ENCODE measurements at regions of chr9 and their contacts with region 1.

Region 1: GRCh38 chr9:32550562-32551433 is 1.3 kb upstream of the SMIM27 start:
- DNase-seq: peak; percentile 81 to 97
- H3K4me3 ChIP-seq: peak overlapping the region; percentile 67 to 80
- H3K27ac ChIP-seq: peak overlapping the region; percentile 80 to 90
- H3K4me1 ChIP-seq: peaks cover 0 to 16% of the 10 kb centered on the region in 2 donors
- H3K27me3 ChIP-seq: no peaks in the 10 kb centered on the region
- CTCF ChIP-seq: peak in 1 of 3 experiments; percentile 24

Region 2: DNA sequence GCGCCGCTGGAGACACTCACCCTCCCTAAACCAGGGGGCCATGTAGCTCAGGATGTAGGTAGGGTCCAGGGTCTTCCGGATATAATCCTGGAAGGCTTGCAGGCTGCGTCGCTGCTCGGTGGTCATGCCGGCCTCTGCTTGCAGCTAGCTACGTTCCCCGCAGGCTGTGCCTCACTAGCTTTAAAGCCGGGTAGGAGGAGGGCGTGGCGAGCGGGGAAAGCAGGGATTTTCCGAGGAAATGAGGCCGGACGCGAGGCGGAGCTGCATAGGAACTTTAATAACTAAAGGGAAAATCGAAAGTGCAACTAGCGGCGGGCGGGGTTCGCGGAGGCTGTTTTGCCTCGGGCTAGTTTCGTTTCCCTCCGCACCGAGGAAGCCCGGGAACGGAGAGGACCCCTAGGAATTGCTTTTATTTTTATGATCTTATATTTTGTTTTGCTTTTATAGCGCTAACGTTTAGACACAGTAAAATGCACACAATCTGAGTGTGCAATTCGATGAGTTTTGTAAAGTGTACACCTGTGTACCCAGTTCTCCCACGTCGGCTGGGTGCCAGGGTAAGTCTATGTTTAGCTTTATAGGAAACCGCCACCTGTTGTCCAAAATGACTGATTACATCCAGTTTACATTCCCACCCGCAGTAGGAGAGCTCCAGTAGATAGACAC is 24.6 kb before region 1 on chr9 and contains the start of gene RIGI:
- intact Hi-C with region 1: loop called (anchors 1 kb)
- DNase-seq: peak; percentile 72 to 97
- H3K4me3 ChIP-seq: peak within 1 kb of the TSS; percentile 71 to 78
- H3K27ac ChIP-seq: peak within 1 kb of the TSS; percentile 78 to 79
- H3K4me1 ChIP-seq: peaks cover 7 to 17% of the 10 kb centered on the region in 2 donors
- H3K27me3 ChIP-seq: no peaks in the 10 kb centered on the region
- CTCF ChIP-seq: peak; percentile 16 to 35 (median 29)
- total RNA-seq, gene RIGI: 1.9 TPM

Region 3: GRCh38 chr9:32571969-32572899 is 21.4 kb after region 1 on chr9:
- intact Hi-C with region 1: loop called (anchors 1 kb)
- DNase-seq: peak in 1 of 2 donors; percentile 81
- H3K4me3 ChIP-seq: peak overlapping the region; percentile 66 to 93
- H3K27ac ChIP-seq: peak overlapping the region; percentile 82 to 91
- H3K4me1 ChIP-seq: peaks cover 0 to 12% of the 10 kb centered on the region in 2 donors
- H3K27me3 ChIP-seq: no peaks in the 10 kb centered on the region
- CTCF ChIP-seq: peak; percentile 32 to 53 (median 34)

Region 4: DNA sequence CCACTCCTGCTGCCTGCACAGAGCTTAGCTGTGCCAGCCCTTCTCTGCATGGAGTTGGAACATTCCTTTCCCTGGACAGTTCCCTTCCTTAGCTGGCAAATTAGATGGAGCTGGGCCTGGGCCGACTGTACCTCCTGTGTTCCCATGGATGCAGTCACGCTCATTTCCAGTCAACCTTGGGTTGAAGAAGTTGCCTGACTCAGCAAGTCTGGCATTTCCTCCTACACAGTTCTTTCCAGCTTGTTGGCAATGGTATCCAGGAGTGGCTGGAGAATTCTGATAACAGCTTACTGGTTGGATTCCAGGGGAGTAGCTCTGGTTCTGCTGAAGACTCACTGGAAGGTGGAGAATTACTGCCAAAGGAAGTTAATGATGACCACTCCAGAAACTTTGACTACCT is 93.9 kb after region 1 on chr9:
- intact Hi-C with region 1: no loop called
- DNase-seq: no peak
- H3K4me3 ChIP-seq: no peak overlapping the region
- H3K27ac ChIP-seq: no peak overlapping the region
- H3K4me1 ChIP-seq: no peaks in the 10 kb centered on the region
- H3K27me3 ChIP-seq: no peaks in the 10 kb centered on the region
- CTCF ChIP-seq: no peak

Region 5: GRCh38 chr9:33737811-33738606 is 1187.2 kb after region 1 on chr9:
- intact Hi-C with region 1: no loop called
- DNase-seq: no peak
- H3K4me3 ChIP-seq: no peak overlapping the region
- H3K27ac ChIP-seq: no peak overlapping the region
- H3K4me1 ChIP-seq: no peaks in the 10 kb centered on the region
- H3K27me3 ChIP-seq: no peaks in the 10 kb centered on the region
- CTCF ChIP-seq: no peak